A673 (cell line): ENCODE measurements at regions of chr10 and their contacts with region 1.

Region 1: DNA sequence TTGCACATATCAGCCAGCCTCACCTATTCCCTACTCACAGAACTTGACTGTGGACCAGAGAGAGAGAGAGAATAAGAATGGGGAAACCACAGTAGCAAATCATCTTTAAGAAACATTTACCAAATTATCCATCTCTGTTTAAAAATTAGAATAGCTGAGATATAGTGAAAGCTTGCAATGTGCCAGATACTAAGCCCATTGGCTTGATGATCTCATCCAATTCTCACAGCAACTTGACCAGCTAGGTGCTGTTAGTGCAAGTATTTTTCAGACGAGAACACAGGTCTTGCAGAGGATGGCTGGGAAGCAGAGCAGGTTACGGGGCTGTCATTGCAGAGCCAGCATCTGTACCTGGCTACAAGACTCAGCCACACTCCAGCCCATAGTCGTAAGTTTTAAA is 50.9 kb downstream of the KLF6 start:
- DNase-seq: no peak
- H3K4me3 ChIP-seq: no peak overlapping the region
- H3K27ac ChIP-seq: no peak overlapping the region
- H3K4me1 ChIP-seq: peaks cover 7% of the 10 kb centered on the region
- H3K27me3 ChIP-seq: no peaks in the 10 kb centered on the region
- CTCF ChIP-seq: no peak

Region 2: DNA sequence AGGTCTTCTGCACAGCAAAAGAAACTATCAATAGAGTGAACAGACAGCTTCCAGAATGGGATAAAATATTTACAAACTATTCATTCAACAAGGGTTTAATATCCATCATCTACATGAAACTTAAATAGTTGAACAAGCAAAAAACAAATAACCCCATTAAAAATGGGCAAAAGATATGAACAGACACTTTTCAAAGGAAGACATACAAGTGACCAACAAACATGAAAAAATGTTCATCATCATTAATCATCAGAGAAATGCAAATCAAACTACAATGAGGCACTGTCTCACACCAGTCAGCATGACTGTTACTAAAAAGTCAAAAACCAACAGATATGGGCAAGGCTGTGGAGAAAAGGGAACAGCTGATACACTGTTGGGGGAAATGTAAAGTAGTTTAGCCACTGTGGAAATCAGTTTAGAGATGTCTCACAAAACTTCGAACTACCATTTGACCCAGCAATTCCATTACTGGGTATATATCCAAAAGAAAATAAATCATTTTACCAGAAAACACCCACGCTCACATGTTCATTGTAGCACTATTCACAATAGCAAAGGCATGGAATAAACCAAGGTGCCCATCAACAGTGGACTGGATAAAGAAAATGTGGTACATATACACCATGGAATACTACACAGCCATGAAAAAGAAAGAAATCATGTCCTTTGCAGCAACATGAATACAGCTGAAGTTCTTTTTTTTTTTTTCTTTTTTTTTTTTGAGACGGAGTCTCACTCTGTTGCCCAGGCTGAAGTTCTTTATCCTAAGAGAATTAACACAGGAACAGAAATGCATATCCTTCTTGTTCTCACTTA is 121.7 kb before region 1 on chr10:
- CTCF ChIA-PET with region 1: no interaction called
- POLR2A ChIA-PET with region 1: interaction called, 24 read pairs
- intact Hi-C with region 1: no loop called
- DNase-seq: no peak
- H3K4me3 ChIP-seq: no peak overlapping the region
- H3K27ac ChIP-seq: no peak overlapping the region
- H3K4me1 ChIP-seq: no peaks in the 10 kb centered on the region
- H3K27me3 ChIP-seq: no peaks in the 10 kb centered on the region
- CTCF ChIP-seq: no peak